Activated naive CD4-positive, alpha-beta T cell treated with anti-CD3 and anti-CD28 coated beads for 36 hours (primary cell): ENCODE measurements at regions of chr22 and their contacts with region 1.

Region 1: DNA sequence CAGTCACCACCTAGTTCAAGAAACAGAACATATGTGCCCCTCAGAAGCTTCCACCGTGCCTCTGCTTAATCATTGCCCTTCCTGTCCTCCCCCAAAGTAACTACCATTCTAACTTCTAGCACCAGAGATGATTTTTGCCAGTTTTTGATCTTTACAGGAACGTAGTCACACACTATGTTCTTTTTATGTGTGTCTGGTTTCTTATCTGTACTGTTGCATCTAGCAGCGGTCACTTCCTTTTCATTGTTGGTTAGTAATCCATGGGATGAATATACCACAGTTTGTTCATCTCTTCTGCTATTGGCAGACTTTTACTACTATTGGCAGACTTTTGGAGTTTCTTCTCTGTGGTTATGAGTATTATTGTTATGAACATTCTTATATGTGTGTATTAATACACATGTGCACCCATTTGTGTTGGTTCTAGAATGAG is 34.6 kb downstream of the SPECC1L start:
- DNase-seq: peak; percentile 33
- H3K4me3 Mint-ChIP-seq: no peak overlapping the region
- H3K27ac Mint-ChIP-seq: peak overlapping the region; percentile 1
- H3K4me1 Mint-ChIP-seq: peaks cover 55% of the 10 kb centered on the region
- H3K27me3 Mint-ChIP-seq: no peaks in the 10 kb centered on the region

Region 2: GRCh38 chr22:24284747-24285203 is 20.5 kb before region 1 on chr22:
- CTCF ChIA-PET with region 1: interaction called, 3 read pairs
- intact Hi-C with region 1: loop called (anchors 1 kb)
- DNase-seq: peak; percentile 41
- H3K4me3 Mint-ChIP-seq: peak overlapping the region; percentile 0
- H3K27ac Mint-ChIP-seq: peak overlapping the region; percentile 79
- H3K4me1 Mint-ChIP-seq: peaks cover 51% of the 10 kb centered on the region
- H3K27me3 Mint-ChIP-seq: no peaks in the 10 kb centered on the region

Region 3: GRCh38 chr22:25057013-25057881 is 752.0 kb after region 1 on chr22:
- CTCF ChIA-PET with region 1: no interaction called
- intact Hi-C with region 1: no loop called
- DNase-seq: peak; percentile 91
- H3K4me3 Mint-ChIP-seq: no peak overlapping the region
- H3K27ac Mint-ChIP-seq: no peak overlapping the region
- H3K4me1 Mint-ChIP-seq: peaks cover 49% of the 10 kb centered on the region
- H3K27me3 Mint-ChIP-seq: no peaks in the 10 kb centered on the region